ENCODE measurements at regions of chr3 and their contacts with region 1.

Region 1: GRCh38 chr3:71087143-71088018 is 496.1 kb downstream of the FOXP1 start:
- DNase-seq: peak; percentile 31
- H3K4me3 Mint-ChIP-seq: peak overlapping the region; percentile 4
- H3K27ac Mint-ChIP-seq: peak overlapping the region; percentile 80
- H3K4me1 Mint-ChIP-seq: peaks cover 74% of the 10 kb centered on the region
- H3K27me3 Mint-ChIP-seq: no peaks in the 10 kb centered on the region

Region 2: GRCh38 chr3:70856414-70857162 is 230.8 kb before region 1 on chr3:
- intact Hi-C with region 1: loop called (anchors 1 kb)
- DNase-seq: no peak
- H3K4me3 Mint-ChIP-seq: no peak overlapping the region
- H3K27ac Mint-ChIP-seq: peak overlapping the region; percentile 45
- H3K4me1 Mint-ChIP-seq: peaks cover 28% of the 10 kb centered on the region
- H3K27me3 Mint-ChIP-seq: peaks cover 26% of the 10 kb centered on the region

Region 3: GRCh38 chr3:71050538-71051258 is 36.7 kb before region 1 on chr3:
- intact Hi-C with region 1: loop called (anchors 1 kb)
- DNase-seq: no peak
- H3K4me3 Mint-ChIP-seq: peak overlapping the region; percentile 2
- H3K27ac Mint-ChIP-seq: peak overlapping the region; percentile 86
- H3K4me1 Mint-ChIP-seq: peaks cover 95% of the 10 kb centered on the region
- H3K27me3 Mint-ChIP-seq: no peaks in the 10 kb centered on the region

Region 4: DNA sequence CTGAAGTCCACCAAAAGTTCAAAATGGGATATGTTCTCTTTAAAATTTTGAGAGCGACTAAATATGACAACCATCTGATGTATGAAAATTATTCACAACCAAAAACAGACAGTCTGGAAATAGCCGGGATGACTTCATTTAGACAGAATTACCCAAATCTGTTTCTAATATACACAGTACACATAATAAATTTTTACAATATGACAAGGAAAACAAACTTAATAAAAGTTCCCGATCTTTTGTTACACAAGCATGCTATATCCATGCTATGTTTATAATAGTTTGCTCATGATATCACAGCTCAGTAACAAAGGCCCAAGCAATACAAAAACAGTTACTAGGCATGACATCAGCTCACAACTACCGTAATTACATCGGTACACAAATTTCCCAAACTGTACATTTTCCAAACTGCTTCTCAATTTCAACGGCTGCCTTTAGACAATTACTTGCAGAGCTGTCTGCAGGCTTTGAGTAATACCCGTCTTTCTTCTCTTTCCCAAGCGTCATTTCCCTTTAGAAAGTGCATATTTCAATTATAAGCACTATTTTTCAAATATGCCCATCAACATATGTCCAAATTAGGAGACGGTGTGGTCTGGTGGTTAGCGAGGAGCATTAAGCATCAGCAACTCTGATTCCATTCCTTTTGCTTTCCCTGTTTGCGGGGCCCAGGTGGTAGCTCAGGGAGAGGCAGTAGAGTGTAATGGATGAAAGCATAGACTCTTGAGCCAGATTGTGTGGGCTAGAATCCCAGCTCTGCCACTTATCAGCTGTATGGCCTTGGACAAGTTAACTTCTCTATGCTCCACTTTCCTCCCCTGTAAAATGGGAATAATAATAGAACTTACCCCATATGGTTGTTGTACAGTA is 15.0 kb after region 1 on chr3:
- intact Hi-C with region 1: loop called (anchors 1 kb)
- DNase-seq: no peak
- H3K4me3 Mint-ChIP-seq: no peak overlapping the region
- H3K27ac Mint-ChIP-seq: no peak overlapping the region
- H3K4me1 Mint-ChIP-seq: peaks cover 70% of the 10 kb centered on the region
- H3K27me3 Mint-ChIP-seq: no peaks in the 10 kb centered on the region

Region 5: GRCh38 chr3:71130471-71131374 is 43.3 kb after region 1 on chr3:
- intact Hi-C with region 1: loop called (anchors 1 kb)
- DNase-seq: peak; percentile 66
- H3K4me3 Mint-ChIP-seq: peak overlapping the region; percentile 91
- H3K27ac Mint-ChIP-seq: peak overlapping the region; percentile 94
- H3K4me1 Mint-ChIP-seq: peaks cover 62% of the 10 kb centered on the region
- H3K27me3 Mint-ChIP-seq: no peaks in the 10 kb centered on the region

Region 6: DNA sequence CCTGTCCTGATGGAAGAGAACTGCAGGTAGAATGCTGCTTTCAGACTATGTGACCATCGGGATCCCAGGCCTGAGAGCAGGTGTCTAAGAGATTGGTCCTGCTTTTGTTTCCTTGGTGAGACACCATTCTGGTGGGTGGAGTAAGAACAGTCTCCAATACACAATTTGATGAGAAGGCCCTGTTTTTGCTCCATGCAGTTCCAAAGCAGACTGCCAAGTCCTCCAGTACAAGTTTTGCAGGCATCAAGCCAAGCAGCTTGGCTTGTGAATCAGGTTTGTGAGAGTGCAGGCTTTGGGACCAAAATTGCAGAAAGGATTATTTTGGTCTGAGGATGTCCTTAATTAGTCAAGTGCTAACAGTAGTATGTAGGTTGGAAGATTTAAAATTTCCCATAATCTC is 114.6 kb after region 1 on chr3:
- intact Hi-C with region 1: no loop called
- DNase-seq: no peak
- H3K4me3 Mint-ChIP-seq: no peak overlapping the region
- H3K27ac Mint-ChIP-seq: no peak overlapping the region
- H3K4me1 Mint-ChIP-seq: peaks cover 40% of the 10 kb centered on the region
- H3K27me3 Mint-ChIP-seq: no peaks in the 10 kb centered on the region

Region 7: DNA sequence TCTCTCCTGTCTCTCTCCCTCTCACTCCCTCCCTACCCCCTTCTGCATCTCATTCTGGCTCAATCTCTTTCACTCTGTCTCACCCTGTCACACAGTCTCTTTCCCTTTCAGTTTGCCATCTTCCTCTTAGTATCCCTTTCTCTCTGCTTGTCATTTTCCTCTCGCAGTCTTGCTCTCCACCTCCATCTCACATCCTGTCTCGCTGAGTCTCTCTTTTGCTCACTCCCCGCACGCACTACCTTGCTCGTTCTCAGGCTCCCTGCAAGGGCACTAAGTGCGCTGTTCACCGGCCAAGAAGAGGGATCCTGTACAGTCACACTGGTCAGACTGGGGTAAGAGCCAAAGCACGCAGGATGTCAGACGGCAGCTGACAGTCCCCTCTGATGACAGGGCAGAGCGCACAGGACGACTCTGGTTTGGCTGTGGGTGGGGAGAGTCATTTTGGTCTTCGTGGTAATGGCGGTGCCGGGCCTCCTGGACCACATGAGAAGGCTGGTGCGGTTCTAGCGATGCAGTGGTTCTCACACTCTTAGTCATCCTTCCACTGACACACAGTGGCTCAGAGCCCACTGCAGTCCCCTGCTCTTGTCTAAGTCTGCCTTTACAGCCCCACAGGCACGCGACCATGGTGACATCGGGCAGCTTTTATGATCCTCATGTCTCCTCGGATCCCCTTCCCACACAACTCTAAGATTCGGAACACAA is 139.3 kb after region 1 on chr3:
- intact Hi-C with region 1: loop called (anchors 1 kb)
- DNase-seq: peak; percentile 86
- H3K4me3 Mint-ChIP-seq: peak overlapping the region; percentile 88
- H3K27ac Mint-ChIP-seq: peak overlapping the region; percentile 97
- H3K4me1 Mint-ChIP-seq: peaks cover 63% of the 10 kb centered on the region
- H3K27me3 Mint-ChIP-seq: peaks cover 1% of the 10 kb centered on the region

Region 8: DNA sequence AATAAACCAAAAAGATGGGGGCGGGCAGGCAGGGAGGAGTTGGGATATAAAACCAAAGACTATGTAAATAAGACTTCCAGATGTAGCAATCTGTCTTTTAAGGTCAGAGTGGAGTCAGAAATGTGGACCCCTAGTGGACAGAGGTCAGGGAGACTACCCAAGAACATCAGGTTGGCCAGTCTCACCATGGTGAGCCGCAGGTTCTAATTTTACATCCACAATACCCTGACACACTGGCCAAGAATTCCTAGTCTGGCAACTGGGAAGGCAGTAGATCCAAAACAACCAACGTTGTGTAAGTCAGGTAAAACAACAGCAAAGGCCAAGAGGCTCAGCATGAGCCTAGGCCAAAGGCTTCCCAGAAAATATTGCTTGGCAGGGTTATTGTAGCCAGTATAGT is 292.7 kb after region 1 on chr3:
- intact Hi-C with region 1: loop called (anchors 2 kb)
- DNase-seq: no peak
- H3K4me3 Mint-ChIP-seq: no peak overlapping the region
- H3K27ac Mint-ChIP-seq: peak overlapping the region; percentile 68
- H3K4me1 Mint-ChIP-seq: peaks cover 56% of the 10 kb centered on the region
- H3K27me3 Mint-ChIP-seq: no peaks in the 10 kb centered on the region

Measured in activated T-helper 2 cell treated with anti-CD3 and anti-CD28 coated beads, Interferon-gamma antibody, Interleukin-2, Interleukin-4, amounts not matched to agents 10 μg/mL and 5 μg/mL and 100 μg/mL, durations not matched to agents 14 hours and 24 hours and 36 hours (primary cell).